HAP-1 (cell line): ENCODE measurements at regions of chr3 and their contacts with region 1.

Region 1: GRCh38 chr3:44198284-44199269 is 43.1 kb upstream of the TOPAZ1 start:
- DNase-seq: peak; percentile 65 to 81
- H3K4me3 ChIP-seq: no peak overlapping the region
- H3K4me1 ChIP-seq: no peaks in the 10 kb centered on the region
- H3K27me3 ChIP-seq: peaks cover 14% of the 10 kb centered on the region

Region 2: GRCh38 chr3:43540624-43541023 is 658.0 kb before region 1 on chr3:
- in situ Hi-C with region 1: loop called (anchors 10 kb)
- DNase-seq: no peak
- H3K4me3 ChIP-seq: no peak overlapping the region
- H3K4me1 ChIP-seq: no peaks in the 10 kb centered on the region; the same call in 1 of the 2 replicates
- H3K27me3 ChIP-seq: no peaks in the 10 kb centered on the region

Region 3: DNA sequence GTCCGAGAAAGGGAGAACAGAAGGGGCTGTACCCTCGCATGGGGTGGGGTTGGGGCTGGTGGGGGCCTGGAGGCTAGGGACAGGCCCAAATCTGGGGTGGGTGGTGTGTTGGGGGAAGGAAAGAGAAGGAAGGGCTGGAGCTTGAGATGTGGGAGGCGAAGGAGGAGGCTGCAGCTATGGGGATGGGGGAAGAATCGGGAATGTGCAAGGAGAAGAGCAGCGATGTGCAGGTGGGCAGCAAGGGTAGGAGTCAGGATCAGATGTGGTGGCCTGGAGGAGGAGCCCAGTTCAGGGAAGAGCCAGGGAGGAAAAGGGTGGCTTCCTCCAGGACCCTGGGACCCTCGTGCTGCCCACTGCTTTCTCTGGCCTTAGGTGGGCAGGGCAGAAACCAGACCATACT is 471.2 kb after region 1 on chr3:
- in situ Hi-C with region 1: no loop called
- DNase-seq: no peak
- H3K4me3 ChIP-seq: no peak overlapping the region
- H3K4me1 ChIP-seq: no peaks in the 10 kb centered on the region
- H3K27me3 ChIP-seq: no peaks in the 10 kb centered on the region